Aorta (tissue), 5 donors: ENCODE measurements at regions of chr21 and their contacts with region 1.

Region 1: DNA sequence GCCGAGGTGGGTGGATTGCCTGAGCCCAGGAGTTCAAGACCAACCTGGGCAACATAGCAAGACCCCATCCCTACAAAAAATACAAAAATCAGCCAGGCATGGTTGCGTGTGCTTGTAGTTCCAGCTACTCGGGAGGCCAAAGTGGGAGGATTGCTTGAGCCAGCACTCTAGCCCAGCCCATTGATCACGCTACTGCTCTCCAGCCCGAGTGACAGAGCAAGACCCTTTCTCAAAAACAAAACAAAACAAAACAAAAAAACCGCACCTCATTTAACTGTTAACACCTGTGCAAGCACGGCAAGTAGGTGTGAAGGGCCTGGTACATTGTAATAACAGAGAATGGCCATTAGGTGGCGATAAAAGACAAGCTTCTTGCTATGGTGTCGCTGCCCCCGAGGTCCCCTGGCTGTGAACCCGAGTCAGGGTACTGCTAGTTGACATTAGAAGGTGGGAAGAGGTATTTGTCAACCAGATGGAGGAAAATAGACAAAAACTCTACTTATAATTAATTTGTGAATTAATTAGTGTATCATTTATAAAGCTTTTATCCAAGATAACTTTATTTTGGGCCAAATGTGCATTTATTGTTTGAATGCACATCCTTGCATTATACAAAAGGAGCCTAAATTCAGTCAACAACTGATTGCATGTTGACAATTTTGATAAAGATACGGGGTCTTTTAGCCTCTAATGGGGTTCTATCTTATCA is 66.5 kb downstream of the SH3BGR start:
- DNase-seq: no peak
- ATAC-seq: no peak
- H3K4me3 ChIP-seq: no peak overlapping the region
- H3K27ac ChIP-seq: no peak overlapping the region
- H3K4me1 ChIP-seq: no peaks in the 10 kb centered on the region
- H3K27me3 ChIP-seq: no peaks in the 10 kb centered on the region

Region 2: DNA sequence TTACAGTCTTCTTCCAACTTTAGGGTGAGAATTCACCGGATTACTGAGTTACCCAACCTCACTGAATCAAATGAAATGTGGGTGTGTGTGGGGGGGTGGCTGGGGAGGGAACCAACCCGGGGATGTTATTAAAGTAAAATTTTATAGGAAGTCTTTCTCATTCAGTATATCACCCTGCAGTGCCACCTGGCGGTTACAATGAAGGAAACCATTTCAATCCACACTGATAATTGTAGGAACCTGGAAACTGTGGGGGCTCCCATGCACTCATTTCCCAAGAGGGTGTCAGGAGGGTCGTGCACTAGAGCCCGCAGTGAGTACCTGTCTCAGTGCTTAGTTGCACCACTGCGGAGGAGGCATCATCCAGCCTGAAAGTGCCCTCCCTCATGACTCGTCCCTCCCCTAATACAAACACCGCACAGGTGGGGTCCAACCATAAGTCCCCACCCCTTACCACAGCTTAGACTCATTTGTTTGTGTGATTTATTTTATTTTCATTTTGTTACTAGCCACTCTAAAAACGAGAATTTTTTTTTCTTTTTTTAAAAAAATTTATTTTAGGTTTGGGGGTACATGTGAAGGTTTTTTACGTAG is 197.6 kb after region 1 on chr21:
- intact Hi-C with region 1: loop called (anchors 2 kb)
- DNase-seq: peak in 1 of 2 donors; percentile 54
- ATAC-seq: no peak
- H3K4me3 ChIP-seq: no peak overlapping the region
- H3K27ac ChIP-seq: no peak overlapping the region
- H3K4me1 ChIP-seq: no peaks in the 10 kb centered on the region
- H3K27me3 ChIP-seq: no peaks in the 10 kb centered on the region